Heart right ventricle (tissue), 16 donors: ENCODE measurements at regions of chr5 and their contacts with region 1.

Region 1: GRCh38 chr5:43815504-43815903 is 212.5 kb downstream of the NNT start:
- DNase-seq: no peak
- ATAC-seq: no peak
- H3K4me3 ChIP-seq: no peak overlapping the region
- H3K27ac ChIP-seq: no peak overlapping the region
- H3K4me1 ChIP-seq: no peaks in the 10 kb centered on the region
- H3K27me3 ChIP-seq: no peaks in the 10 kb centered on the region
- CTCF ChIP-seq: no peak

Region 2: DNA sequence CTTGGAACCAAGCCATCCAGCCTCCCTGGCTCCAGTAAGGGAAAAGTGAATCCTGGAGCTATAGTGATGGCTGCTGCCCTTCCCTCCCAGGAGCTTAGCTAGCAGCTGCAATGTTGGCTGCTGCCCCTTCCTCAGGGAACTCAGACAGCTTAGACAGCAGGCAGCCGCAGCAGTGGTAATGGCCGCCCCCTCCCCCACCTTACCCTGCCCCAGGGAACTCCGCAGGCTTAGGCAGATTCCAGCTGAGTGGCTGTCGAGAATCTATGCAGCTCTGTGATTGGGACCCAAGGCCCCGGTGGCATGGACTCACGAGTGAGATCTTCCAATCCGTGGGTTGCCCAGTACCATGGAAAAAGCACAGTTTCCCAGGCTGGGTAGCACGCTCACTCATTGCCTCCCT is 166.1 kb after region 1 on chr5:
- intact Hi-C with region 1: no loop called
- DNase-seq: no peak
- ATAC-seq: no peak
- H3K4me3 ChIP-seq: no peak overlapping the region
- H3K27ac ChIP-seq: no peak overlapping the region
- H3K4me1 ChIP-seq: no peaks in the 10 kb centered on the region
- H3K27me3 ChIP-seq: no peaks in the 10 kb centered on the region
- CTCF ChIP-seq: no peak

Region 3: GRCh38 chr5:44089424-44090144 is 274.1 kb after region 1 on chr5:
- intact Hi-C with region 1: loop called in 1 of 10 experiments (anchors 5 kb)
- DNase-seq: peak in 1 of 2 donors; percentile 25
- ATAC-seq: peak; percentile 38 to 91 (median 76)
- H3K4me3 ChIP-seq: no peak overlapping the region
- H3K27ac ChIP-seq: peak overlapping the region in 5 of 10 donors; percentile 6 to 49 (median 30)
- H3K4me1 ChIP-seq: peaks cover 0 to 9% (median 5%) of the 10 kb centered on the region in 9 donors
- H3K27me3 ChIP-seq: no peaks in the 10 kb centered on the region
- CTCF ChIP-seq: no peak